Endothelial cell of umbilical vein (primary cell): ENCODE measurements at regions of chr10 and their contacts with region 1.

Region 1: GRCh38 chr10:95374597-95375209 is 83.9 kb upstream of the PDLIM1 start:
- DNase-seq: peak; percentile 50
- H3K4me3 ChIP-seq: no peak overlapping the region
- H3K27ac ChIP-seq: no peak overlapping the region
- H3K4me1 ChIP-seq: no peaks in the 10 kb centered on the region
- H3K27me3 ChIP-seq: peaks cover 0 to 7% of the 10 kb centered on the region in 2 experiments
- CTCF ChIP-seq: peak; percentile 83 to 91
- POLR2A ChIP-seq: no peak

Region 2: GRCh38 chr10:95430231-95430951 is 55.7 kb after region 1 on chr10:
- CTCF ChIA-PET with region 1: interaction called, 43 read pairs
- POLR2A ChIA-PET with region 1: no interaction called
- dilution Hi-C with region 1: no loop called
- intact Hi-C with region 1: loop called (anchors 1 kb)
- DNase-seq: peak; percentile 61
- H3K4me3 ChIP-seq: no peak overlapping the region
- H3K27ac ChIP-seq: no peak overlapping the region
- H3K4me1 ChIP-seq: peaks cover 5% of the 10 kb centered on the region
- H3K27me3 ChIP-seq: peaks cover 0 to 2% of the 10 kb centered on the region in 2 experiments
- CTCF ChIP-seq: peak; percentile 89 to 95
- POLR2A ChIP-seq: no peak

Region 3: GRCh38 chr10:95601116-95601719 is 226.5 kb after region 1 on chr10:
- CTCF ChIA-PET with region 1: interaction called, 194 read pairs
- POLR2A ChIA-PET with region 1: interaction called, 5 read pairs
- dilution Hi-C with region 1: no loop called
- intact Hi-C with region 1: loop called (anchors 1 kb)
- DNase-seq: peak; percentile 89
- H3K4me3 ChIP-seq: no peak overlapping the region
- H3K27ac ChIP-seq: no peak overlapping the region
- H3K4me1 ChIP-seq: no peaks in the 10 kb centered on the region
- H3K27me3 ChIP-seq: peaks cover 0 to 7% of the 10 kb centered on the region in 2 experiments
- CTCF ChIP-seq: peak; percentile 90 to 96
- POLR2A ChIP-seq: no peak

Region 4: GRCh38 chr10:95864906-95865813 is 490.5 kb after region 1 on chr10:
- CTCF ChIA-PET with region 1: interaction called, 10 read pairs
- POLR2A ChIA-PET with region 1: no interaction called
- dilution Hi-C with region 1: no loop called
- intact Hi-C with region 1: no loop called
- DNase-seq: peak; percentile 69
- H3K4me3 ChIP-seq: no peak overlapping the region
- H3K27ac ChIP-seq: no peak overlapping the region
- H3K4me1 ChIP-seq: no peaks in the 10 kb centered on the region
- H3K27me3 ChIP-seq: no peaks in the 10 kb centered on the region
- CTCF ChIP-seq: peak; percentile 59 to 73
- POLR2A ChIP-seq: no peak